ENCODE measurements at regions of chr13 and their contacts with region 1.

Region 1: GRCh38 chr13:45047394-45048310 is 58.3 kb downstream of the GPALPP1 start:
- DNase-seq: peak; percentile 53 to 85
- H3K4me3 ChIP-seq: peak overlapping the region; percentile 14 to 59 (median 50); a peak in 7 of 8 replicates
- H3K27ac ChIP-seq: no peak overlapping the region
- H3K4me1 ChIP-seq: no peaks in the 10 kb centered on the region; a peak in 1 of 7 replicates
- H3K27me3 ChIP-seq: no peaks in the 10 kb centered on the region
- CTCF ChIP-seq: peak; percentile 68 to 93 (median 84)
- EP300 ChIP-seq: no peak
- POLR2A ChIP-seq: no peak
- RAD21 ChIP-seq: peak; percentile 97 to 99

Region 2: GRCh38 chr13:45021250-45021649 is 26.4 kb before region 1 on chr13:
- CTCF ChIA-PET with region 1: no interaction called
- POLR2A ChIA-PET with region 1: no interaction called
- DNase-seq: no peak
- H3K4me3 ChIP-seq: no peak overlapping the region
- H3K27ac ChIP-seq: no peak overlapping the region
- H3K4me1 ChIP-seq: no peaks in the 10 kb centered on the region
- H3K27me3 ChIP-seq: no peaks in the 10 kb centered on the region
- CTCF ChIP-seq: no peak
- EP300 ChIP-seq: no peak
- POLR2A ChIP-seq: no peak
- RAD21 ChIP-seq: no peak

Region 3: GRCh38 chr13:45102136-45102507 is 54.5 kb after region 1 on chr13:
- CTCF ChIA-PET with region 1: interaction called, 10 read pairs
- POLR2A ChIA-PET with region 1: interaction called, 3 read pairs
- DNase-seq: no peak
- H3K4me3 ChIP-seq: no peak overlapping the region
- H3K27ac ChIP-seq: no peak overlapping the region
- H3K4me1 ChIP-seq: peaks cover 0 to 12% (median 9%) of the 10 kb centered on the region in 4 experiments; a peak in 4 of 7 replicates
- H3K27me3 ChIP-seq: no peaks in the 10 kb centered on the region
- CTCF ChIP-seq: no peak
- EP300 ChIP-seq: no peak
- POLR2A ChIP-seq: no peak
- RAD21 ChIP-seq: no peak

Region 4: DNA sequence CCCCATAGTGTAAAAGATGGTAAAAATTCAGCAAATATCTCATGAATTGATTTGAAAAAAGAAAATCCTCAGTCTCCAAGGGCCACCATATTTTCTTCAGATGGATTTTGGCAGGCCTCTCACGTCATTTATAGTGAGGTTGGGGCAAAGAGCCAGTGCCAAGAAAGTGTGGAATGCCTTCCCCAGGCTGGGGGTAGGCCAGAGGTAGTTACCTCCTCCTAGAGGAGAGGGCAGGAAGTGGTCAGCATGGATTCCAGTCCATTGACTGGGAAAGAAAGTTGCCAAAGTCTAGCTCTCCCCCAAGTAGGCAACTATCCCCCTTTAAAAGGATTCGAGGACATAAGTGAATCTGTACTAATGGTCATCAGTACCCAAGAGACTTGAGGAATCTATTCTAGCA is 221.6 kb after region 1 on chr13:
- CTCF ChIA-PET with region 1: interaction called, 27 read pairs
- POLR2A ChIA-PET with region 1: no interaction called
- DNase-seq: no peak
- H3K4me3 ChIP-seq: no peak overlapping the region
- H3K27ac ChIP-seq: no peak overlapping the region
- H3K4me1 ChIP-seq: peaks cover 0 to 5% (median 2%) of the 10 kb centered on the region in 4 experiments; a peak in 2 of 7 replicates
- H3K27me3 ChIP-seq: no peaks in the 10 kb centered on the region
- CTCF ChIP-seq: peak; percentile 4 to 53 (median 30); a peak in 3 of 4 replicates
- EP300 ChIP-seq: no peak
- POLR2A ChIP-seq: no peak
- RAD21 ChIP-seq: peak; percentile 21 to 46; a peak in 3 of 4 replicates

Region 5: DNA sequence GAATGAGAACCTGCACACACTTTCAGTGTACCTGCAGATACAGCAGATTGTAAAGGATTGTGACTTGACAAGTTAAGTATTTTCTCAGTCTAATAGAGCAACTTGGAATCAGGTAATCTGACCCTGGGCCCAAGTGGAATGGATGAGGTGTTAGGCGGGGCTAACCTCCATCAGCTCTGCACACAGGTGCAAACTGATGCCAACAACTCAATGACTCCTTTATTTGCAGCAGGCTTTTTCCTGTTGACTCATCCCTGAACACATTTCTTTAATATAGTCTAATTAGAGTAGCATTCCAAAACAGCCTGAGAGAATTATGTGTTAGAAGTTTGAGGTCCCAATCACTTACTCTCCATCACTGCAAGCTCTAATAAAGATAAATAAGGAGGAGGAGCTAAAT is 244.5 kb after region 1 on chr13:
- CTCF ChIA-PET with region 1: interaction called, 25 read pairs
- POLR2A ChIA-PET with region 1: no interaction called
- DNase-seq: no peak
- H3K4me3 ChIP-seq: no peak overlapping the region
- H3K27ac ChIP-seq: no peak overlapping the region
- H3K4me1 ChIP-seq: no peaks in the 10 kb centered on the region
- H3K27me3 ChIP-seq: no peaks in the 10 kb centered on the region
- CTCF ChIP-seq: no peak
- EP300 ChIP-seq: no peak
- POLR2A ChIP-seq: no peak
- RAD21 ChIP-seq: no peak

Region 6: DNA sequence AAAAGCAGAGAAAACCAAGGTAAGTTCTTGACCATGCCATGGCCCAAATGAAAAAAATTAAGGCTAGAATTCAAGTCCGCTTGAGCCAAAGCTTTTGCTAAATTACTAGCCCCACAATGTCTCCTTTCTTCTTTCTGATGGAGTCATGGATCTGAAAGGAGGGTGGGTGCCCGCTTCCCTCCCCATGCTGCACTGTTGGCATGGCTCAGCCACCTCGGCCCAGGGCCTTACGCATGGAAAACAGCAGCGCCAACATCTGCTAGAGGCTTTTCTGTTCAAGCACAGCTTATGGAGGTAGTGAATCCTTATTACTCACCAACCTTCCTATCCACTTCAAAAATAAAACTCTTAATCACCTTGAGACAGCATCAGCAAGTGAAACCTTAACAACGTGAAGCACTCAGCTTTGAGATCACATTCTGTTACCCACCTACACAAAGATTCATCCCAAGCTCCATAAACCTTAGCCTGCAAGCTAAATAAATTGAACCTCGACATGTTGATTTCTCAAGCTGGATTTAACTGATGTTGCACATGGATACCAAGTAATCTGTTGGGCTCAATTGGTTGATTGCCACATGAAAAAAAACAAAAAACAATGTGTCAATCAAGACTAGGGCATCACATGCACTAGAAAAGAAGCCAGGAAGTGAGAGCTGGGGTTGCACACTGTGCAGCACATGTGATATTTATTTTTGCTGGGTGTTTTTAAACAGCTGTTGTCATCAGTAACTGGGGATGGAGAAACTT is 250.0 kb after region 1 on chr13:
- CTCF ChIA-PET with region 1: interaction called, 25 read pairs
- POLR2A ChIA-PET with region 1: no interaction called
- DNase-seq: no peak
- H3K4me3 ChIP-seq: no peak overlapping the region
- H3K27ac ChIP-seq: no peak overlapping the region
- H3K4me1 ChIP-seq: peaks cover 0 to 2% (median under 1%) of the 10 kb centered on the region in 4 experiments; a peak in 4 of 7 replicates
- H3K27me3 ChIP-seq: no peaks in the 10 kb centered on the region
- CTCF ChIP-seq: no peak
- EP300 ChIP-seq: no peak
- POLR2A ChIP-seq: no peak
- RAD21 ChIP-seq: no peak

Region 7: DNA sequence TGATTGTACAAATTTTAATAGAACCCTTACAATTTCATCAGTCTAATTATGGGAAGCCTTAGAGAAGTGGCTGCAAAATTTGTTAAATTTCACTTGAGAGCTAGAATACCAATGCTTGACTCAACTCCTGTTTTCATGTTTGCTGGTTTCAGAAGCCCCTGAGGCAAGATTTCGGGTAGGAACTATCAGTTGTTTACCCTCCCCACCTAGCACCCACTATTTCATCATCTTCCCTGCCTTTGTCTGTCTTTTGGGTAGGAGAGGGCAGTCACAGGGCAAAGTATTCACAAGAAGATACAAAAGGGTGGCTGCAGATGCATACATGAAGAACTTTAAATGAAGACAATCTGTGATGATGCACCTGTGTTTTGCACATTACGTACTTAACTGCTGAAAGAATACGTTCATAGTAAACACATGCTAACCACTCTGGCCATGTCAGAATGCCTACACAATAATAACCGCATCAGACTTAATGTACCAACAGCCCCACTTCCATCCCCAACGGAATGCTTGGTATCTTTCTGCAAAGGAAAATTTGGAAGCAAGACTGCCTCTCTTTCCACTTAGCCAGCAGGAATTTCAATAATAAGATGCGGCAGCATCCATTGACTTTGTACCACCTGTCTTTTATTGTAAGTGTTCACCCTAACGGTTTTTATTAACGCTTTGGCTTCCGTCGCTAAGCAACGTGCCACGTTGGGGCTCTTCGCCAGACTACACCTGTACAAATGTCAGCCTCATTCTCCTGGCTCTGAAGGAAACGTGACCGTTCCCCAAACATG is 262.9 kb after region 1 on chr13:
- CTCF ChIA-PET with region 1: interaction called, 75 read pairs
- POLR2A ChIA-PET with region 1: interaction called, 3 read pairs
- DNase-seq: no peak
- H3K4me3 ChIP-seq: peak overlapping the region; percentile 9 to 65 (median 44); a peak in 7 of 8 replicates
- H3K27ac ChIP-seq: no peak overlapping the region
- H3K4me1 ChIP-seq: peaks cover 0 to 17% (median 12%) of the 10 kb centered on the region in 4 experiments
- H3K27me3 ChIP-seq: no peaks in the 10 kb centered on the region
- CTCF ChIP-seq: no peak
- EP300 ChIP-seq: no peak
- POLR2A ChIP-seq: no peak
- RAD21 ChIP-seq: no peak

Measured in H1 (cell line).